Activated T-helper 1 cell treated with anti-CD3 and anti-CD28 coated beads, Interleukin-12 subunit alpha, Interleukin-12 subunit beta, Interleukin-2, Interleukin-4 antibody, amounts not matched to agents 30 ng/mL and 10 ng/mL and 1 ng/mL, durations not matched to agents 14 hours and 24 hours and 36 hours (primary cell): ENCODE measurements at regions of chr7 and their contacts with region 1.

Region 1: DNA sequence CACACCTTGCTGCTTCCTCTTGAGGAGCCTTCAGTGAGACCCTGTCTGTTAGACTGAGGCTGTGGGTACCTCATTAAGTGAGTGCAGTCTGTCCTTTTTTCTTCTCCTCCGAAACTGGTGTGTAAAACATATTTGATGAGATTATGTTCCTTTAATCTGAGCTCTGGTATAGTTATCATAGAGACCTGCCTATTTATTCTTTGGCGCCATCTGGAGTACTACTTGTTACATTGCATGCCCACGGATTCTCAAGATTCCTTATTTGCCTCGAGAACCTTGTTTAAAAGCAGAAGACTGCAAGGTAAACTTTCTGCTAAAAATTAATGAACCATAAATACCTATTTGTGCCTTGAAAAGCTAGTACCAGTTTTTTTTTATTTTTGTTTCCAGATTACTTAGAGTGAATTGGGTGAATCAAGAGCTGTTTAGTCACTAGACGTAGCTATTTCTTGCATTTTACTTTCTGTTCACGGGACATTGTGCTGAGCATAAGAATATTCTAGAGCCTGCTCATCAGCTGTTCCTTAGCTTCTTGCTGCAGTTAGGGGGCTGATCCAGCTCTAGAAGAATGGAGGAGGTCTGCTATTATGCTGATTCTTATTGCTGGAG is 16.9 kb upstream of the STMP1 start:
- DNase-seq: no peak
- H3K4me3 Mint-ChIP-seq: no peak overlapping the region
- H3K27ac Mint-ChIP-seq: no peak overlapping the region
- H3K4me1 Mint-ChIP-seq: no peaks in the 10 kb centered on the region
- H3K27me3 Mint-ChIP-seq: no peaks in the 10 kb centered on the region

Region 2: DNA sequence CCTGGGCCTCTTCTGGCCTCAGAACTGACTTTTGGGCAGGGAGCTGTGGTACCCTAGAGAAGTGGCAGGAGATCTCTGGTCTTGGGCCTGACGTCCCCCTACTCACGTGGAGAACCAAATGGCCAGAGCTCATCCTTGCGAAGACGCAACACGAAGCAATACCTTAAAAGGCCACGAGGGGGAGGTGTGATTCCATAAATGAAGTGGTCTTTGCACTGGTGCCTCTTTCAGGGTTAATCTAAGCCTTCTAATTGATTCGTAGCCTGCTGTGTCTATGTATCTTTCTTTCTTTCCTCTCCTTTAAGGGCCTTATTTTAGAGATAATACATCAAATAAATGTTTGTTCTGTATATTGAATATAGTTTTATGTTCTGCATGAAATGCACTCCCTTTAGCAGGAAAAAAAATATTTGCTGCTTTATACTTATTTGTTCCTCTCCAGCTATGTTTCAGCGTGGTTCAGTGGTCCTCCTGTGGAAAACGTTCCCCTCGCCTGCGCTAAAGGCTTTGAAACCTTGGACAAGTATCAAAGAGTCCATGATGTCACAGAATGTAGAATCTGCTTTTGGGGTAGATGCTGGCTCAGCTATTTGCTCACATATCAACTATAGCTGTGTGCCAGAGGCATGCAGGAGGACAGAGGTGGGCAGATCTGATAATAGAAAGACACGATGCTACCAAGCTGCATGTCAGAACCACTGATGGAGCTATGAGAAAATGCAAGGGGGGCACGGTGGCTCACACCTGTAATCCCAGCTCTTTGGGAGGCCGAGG is 370.7 kb before region 1 on chr7:
- intact Hi-C with region 1: loop called (anchors 1 kb)
- DNase-seq: peak; percentile 57
- H3K4me3 Mint-ChIP-seq: no peak overlapping the region
- H3K27ac Mint-ChIP-seq: no peak overlapping the region
- H3K4me1 Mint-ChIP-seq: no peaks in the 10 kb centered on the region
- H3K27me3 Mint-ChIP-seq: peaks cover 2% of the 10 kb centered on the region

Region 3: DNA sequence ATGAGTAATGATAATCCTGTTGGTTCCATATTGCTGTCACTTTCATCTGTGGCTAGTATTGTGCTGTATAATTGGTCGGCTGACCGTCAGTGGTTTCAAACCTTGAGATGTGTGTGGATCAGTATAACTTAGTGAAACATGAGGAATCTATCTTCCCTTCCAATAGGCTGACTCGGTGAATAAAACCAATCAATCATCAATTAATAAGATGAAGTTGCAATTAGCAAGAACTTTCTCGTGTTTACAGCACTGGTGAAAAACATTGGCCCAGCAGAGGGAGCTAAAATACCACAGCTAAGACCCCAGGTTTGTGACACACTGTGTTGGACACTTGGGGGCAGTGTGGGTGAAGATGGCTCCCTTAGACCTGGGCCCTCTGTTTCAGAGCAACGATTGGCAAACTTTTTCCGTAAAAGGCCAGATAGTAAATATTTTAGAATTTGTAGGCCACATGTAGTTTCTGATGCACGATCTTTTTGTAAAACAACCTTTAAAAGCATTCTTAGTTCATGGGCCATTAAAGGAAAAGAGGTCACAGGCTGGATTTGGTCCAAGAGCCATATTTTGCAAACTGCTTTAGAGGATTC is 363.9 kb before region 1 on chr7:
- intact Hi-C with region 1: loop called (anchors 1 kb)
- DNase-seq: peak; percentile 65
- H3K4me3 Mint-ChIP-seq: no peak overlapping the region
- H3K27ac Mint-ChIP-seq: no peak overlapping the region
- H3K4me1 Mint-ChIP-seq: peaks cover 16% of the 10 kb centered on the region
- H3K27me3 Mint-ChIP-seq: peaks cover 10% of the 10 kb centered on the region

Region 4: GRCh38 chr7:135441791-135442190 is 203.6 kb before region 1 on chr7:
- intact Hi-C with region 1: no loop called
- DNase-seq: no peak
- H3K4me3 Mint-ChIP-seq: no peak overlapping the region
- H3K27ac Mint-ChIP-seq: no peak overlapping the region
- H3K4me1 Mint-ChIP-seq: peaks cover 13% of the 10 kb centered on the region
- H3K27me3 Mint-ChIP-seq: no peaks in the 10 kb centered on the region

Region 5: DNA sequence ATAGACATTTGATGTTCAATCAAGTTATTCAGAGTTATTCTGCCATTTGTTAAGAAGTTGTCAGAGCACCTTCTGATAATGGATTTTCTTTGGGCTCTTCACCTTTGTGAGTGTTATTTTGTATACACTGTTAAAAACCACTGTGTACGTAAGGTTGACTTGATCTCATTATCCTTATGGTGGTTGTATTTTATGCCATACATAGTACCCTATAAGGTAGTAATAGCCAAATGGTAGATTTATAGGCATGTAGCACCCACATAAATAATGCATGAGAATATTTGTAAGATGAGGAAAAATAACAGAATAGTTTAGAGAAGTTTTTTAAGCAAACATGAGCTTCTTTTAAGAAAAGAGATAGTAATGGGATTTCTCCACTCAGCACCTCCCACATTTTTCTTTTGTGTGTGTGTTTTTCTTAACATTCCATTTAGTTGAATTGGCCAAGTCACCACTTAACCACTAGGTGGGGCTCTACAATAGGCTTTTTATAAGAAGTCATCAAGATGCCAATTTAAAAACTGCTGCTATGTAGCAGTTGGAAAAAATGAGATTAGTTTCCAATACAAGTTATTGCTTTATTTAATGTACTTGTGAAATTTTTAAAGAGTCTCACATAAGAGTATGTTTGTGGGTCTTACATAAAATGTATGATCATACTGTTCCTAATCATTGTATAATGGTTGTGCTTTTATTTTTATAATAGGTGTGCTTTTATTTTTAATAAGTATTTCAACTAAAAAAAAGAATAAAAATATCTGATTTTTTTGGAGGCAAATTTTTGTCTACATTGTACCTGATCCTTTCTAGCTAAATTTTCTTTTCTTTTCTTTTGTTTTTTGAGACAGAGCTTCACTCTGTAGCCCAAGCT is 24.2 kb before region 1 on chr7:
- intact Hi-C with region 1: loop called (anchors 1 kb)
- DNase-seq: no peak
- H3K4me3 Mint-ChIP-seq: no peak overlapping the region
- H3K27ac Mint-ChIP-seq: no peak overlapping the region
- H3K4me1 Mint-ChIP-seq: peaks cover 2% of the 10 kb centered on the region
- H3K27me3 Mint-ChIP-seq: no peaks in the 10 kb centered on the region

Region 6: GRCh38 chr7:135662373-135663114 is 17.1 kb after region 1 on chr7 and contains the start of gene STMP1:
- intact Hi-C with region 1: no loop called
- DNase-seq: peak; percentile 93
- H3K4me3 Mint-ChIP-seq: peak within 1 kb of the TSS; percentile 97
- H3K27ac Mint-ChIP-seq: peak within 1 kb of the TSS; percentile 93
- H3K4me1 Mint-ChIP-seq: peaks cover 22% of the 10 kb centered on the region
- H3K27me3 Mint-ChIP-seq: no peaks in the 10 kb centered on the region
- total RNA-seq, gene STMP1: 22.7 and 24.7 TPM in 2 replicates